ENCODE measurements at regions of chr1 and their contacts with region 1.

Region 1: DNA sequence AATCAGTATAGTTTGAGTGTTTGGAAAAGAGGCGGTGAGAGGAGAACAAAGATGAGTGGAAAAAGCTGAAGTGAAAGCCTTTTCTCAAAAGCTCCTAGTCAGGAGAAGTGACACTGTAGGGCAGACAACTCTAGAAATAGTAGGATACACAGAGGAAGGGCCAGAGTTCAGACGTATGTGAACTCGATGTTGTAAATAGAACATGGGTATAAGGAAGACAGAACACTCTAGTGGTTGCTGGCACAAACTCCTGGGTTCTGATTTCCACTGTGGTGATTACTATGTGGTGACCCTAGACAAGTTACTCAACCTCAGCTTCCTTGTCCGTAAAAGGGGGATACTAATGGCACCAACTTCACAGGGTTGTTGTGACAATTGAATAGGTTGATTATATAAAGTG is 30.2 kb upstream of the MGST3 start:
- DNase-seq: no peak
- ATAC-seq: peak in 2 of 4 donors; percentile 38 to 43
- H3K4me3 ChIP-seq: no peak overlapping the region
- H3K27ac ChIP-seq: peak overlapping the region; percentile 47
- H3K4me1 ChIP-seq: no peaks in the 10 kb centered on the region
- H3K27me3 ChIP-seq: no peaks in the 10 kb centered on the region
- CTCF ChIP-seq: no peak

Region 2: DNA sequence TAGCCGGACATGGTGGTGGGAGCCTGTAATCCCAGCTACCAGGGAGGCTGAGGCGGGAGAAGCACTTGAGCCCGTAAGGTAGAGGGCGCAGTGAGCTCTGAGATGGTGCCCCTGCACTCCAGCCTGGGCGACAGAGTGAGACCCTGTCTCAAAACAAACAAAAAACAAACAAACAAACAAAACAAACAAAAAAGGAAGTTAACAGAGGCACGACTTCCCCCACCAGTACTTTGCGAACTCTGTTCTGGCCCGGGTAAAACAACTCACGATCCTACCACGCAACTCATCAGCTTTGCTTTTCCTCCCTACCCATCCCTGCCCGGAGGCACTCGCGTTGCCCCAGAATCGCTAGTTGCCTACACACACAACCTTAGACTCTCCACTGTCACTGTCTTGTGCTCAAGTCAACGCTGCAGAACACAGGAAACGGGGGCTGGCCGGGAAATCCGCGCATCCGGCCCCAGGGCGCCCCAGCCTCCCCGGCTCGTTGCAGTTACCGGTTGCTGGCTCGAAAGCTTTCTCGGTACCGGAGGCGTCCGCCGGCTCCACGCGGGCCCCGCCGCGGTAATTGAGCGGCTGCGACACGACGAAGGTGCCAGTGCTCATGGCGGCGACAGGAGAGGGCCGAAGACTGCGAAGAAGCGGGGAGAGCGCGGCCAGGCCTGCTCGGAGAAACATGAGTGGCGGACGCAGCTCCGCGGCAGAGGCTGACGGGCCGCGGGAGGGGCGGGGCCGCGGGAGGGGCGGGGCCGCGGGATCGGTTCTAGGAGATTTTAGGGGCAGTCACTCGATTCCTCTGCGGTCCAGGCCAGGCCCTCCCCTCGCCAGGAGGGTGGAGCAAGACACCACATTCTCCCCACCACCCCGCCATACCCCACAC is 97.3 kb after region 1 on chr1 and contains the start of gene ALDH9A1:
- intact Hi-C with region 1: loop called in 1 of 2 experiments (anchors 5 kb)
- DNase-seq: peak; percentile 93 to 94
- ATAC-seq: peak; percentile 90 to 94 (median 93)
- H3K4me3 ChIP-seq: peak within 1 kb of the TSS; percentile 77
- H3K27ac ChIP-seq: peak within 1 kb of the TSS; percentile 91
- H3K4me1 ChIP-seq: peaks cover 16% of the 10 kb centered on the region
- H3K27me3 ChIP-seq: no peaks in the 10 kb centered on the region
- CTCF ChIP-seq: peak; percentile 33
- total RNA-seq, gene ALDH9A1: 40.9 to 69.3 (median 49.9) TPM